Common myeloid progenitor, CD34-positive (primary cell): ENCODE measurements at regions of chr4 and their contacts with region 1.

Region 1: GRCh38 chr4:41281038-41281634 is 24.4 kb downstream of the UCHL1 start:
- DNase-seq: peak; percentile 79 to 88 (median 83)
- H3K4me3 ChIP-seq: no peak overlapping the region
- H3K27ac ChIP-seq: no peak overlapping the region
- H3K4me1 ChIP-seq: no peaks in the 10 kb centered on the region
- H3K27me3 ChIP-seq: no peaks in the 10 kb centered on the region

Region 2: GRCh38 chr4:41185614-41186597 is 95.2 kb before region 1 on chr4:
- CTCF ChIA-PET with region 1: no interaction called
- POLR2A ChIA-PET with region 1: no interaction called
- DNase-seq: peak in 2 of 3 donors; percentile 4 to 29
- H3K4me3 ChIP-seq: no peak overlapping the region
- H3K27ac ChIP-seq: no peak overlapping the region
- H3K4me1 ChIP-seq: no peaks in the 10 kb centered on the region
- H3K27me3 ChIP-seq: no peaks in the 10 kb centered on the region

Region 3: GRCh38 chr4:41257257-41257901 is 23.8 kb before region 1 on chr4:
- CTCF ChIA-PET with region 1: interaction called, 26 read pairs
- POLR2A ChIA-PET with region 1: no interaction called
- DNase-seq: peak; percentile 58 to 86 (median 83)
- H3K4me3 ChIP-seq: peak overlapping the region; percentile 51 to 75 (median 61)
- H3K27ac ChIP-seq: no peak overlapping the region
- H3K4me1 ChIP-seq: peaks cover 5 to 25% (median 17%) of the 10 kb centered on the region in 4 experiments
- H3K27me3 ChIP-seq: peaks cover 10 to 29% (median 14%) of the 10 kb centered on the region in 5 experiments

Region 4: GRCh38 chr4:41304221-41304620 is 23.1 kb after region 1 on chr4:
- CTCF ChIA-PET with region 1: interaction called, 11 read pairs
- POLR2A ChIA-PET with region 1: no interaction called
- DNase-seq: no peak
- H3K4me3 ChIP-seq: no peak overlapping the region
- H3K27ac ChIP-seq: no peak overlapping the region
- H3K4me1 ChIP-seq: peaks cover 0 to 6% (median 4%) of the 10 kb centered on the region in 4 experiments
- H3K27me3 ChIP-seq: no peaks in the 10 kb centered on the region

Region 5: DNA sequence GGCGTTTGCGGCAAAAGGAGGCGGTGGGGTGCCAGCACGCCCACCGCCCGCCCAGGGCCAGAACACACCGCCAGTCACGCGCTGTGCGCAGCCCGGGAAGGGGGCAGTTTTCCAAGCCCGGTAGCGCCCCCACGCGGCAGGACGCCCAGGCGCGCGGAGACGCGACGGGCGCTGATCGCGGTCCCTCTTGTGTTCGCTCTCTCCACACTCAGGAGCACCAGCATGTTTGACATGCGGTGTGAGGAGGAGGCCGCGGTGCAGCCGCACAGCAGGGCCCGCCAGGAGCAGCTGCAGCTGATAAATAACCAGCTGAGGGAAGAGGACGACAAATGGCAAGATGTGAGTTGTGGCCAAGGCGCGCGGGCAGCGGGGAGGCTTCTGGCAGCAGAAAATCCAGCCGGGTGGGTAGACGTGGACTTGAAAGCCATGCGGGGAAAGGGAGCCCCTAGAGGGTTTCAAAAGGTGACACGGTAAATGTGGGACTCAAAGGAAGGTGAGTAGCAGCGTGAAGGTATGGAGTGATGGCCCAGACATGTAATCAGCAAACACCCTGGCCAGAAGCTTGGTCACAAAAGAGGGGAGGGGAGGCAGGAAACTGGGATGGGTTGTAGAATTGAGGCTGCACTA is 363.3 kb after region 1 on chr4:
- CTCF ChIA-PET with region 1: interaction called, 62 read pairs
- POLR2A ChIA-PET with region 1: interaction called, 3 read pairs
- DNase-seq: peak; percentile 66 to 80 (median 77)
- H3K4me3 ChIP-seq: peak overlapping the region in 3 of 7 experiments; percentile 33 to 64 (median 38)
- H3K27ac ChIP-seq: no peak overlapping the region
- H3K4me1 ChIP-seq: peaks cover 3 to 37% (median 21%) of the 10 kb centered on the region in 4 experiments
- H3K27me3 ChIP-seq: no peaks in the 10 kb centered on the region

Region 6: DNA sequence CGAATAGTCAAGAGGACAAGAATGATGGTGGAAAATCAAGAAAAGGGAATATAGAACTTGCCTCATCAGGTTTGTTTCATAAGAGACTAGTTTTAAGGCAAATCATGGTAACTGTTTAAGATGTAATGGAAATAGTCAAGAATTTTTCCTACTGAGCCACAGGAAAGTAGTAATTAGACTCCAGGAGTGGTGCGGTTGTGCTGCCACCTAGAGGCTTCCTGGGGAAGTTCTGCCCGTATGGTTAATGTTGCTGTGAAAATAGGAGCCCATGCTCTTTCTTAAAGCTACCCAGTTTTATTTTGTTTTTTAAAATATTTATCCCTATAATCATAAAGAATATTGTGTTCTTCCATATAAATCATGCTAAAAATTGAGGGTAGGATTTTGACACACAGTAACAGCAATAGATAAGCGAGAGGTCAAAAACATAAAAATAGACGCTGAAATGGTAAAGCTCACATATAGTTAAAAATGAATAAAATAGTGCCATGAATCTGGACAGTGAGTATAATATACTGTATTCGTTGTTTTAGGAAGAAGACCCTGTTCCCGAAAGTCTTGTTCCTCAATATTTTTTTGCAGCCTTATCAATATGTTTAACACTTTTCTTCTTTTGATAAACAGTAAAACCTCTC is 380.4 kb after region 1 on chr4:
- CTCF ChIA-PET with region 1: interaction called, 97 read pairs
- POLR2A ChIA-PET with region 1: no interaction called
- DNase-seq: peak; percentile 38 to 73 (median 62)
- H3K4me3 ChIP-seq: no peak overlapping the region
- H3K27ac ChIP-seq: no peak overlapping the region
- H3K4me1 ChIP-seq: no peaks in the 10 kb centered on the region
- H3K27me3 ChIP-seq: peaks cover 0 to 2% (median 0%) of the 10 kb centered on the region in 5 experiments

Region 7: DNA sequence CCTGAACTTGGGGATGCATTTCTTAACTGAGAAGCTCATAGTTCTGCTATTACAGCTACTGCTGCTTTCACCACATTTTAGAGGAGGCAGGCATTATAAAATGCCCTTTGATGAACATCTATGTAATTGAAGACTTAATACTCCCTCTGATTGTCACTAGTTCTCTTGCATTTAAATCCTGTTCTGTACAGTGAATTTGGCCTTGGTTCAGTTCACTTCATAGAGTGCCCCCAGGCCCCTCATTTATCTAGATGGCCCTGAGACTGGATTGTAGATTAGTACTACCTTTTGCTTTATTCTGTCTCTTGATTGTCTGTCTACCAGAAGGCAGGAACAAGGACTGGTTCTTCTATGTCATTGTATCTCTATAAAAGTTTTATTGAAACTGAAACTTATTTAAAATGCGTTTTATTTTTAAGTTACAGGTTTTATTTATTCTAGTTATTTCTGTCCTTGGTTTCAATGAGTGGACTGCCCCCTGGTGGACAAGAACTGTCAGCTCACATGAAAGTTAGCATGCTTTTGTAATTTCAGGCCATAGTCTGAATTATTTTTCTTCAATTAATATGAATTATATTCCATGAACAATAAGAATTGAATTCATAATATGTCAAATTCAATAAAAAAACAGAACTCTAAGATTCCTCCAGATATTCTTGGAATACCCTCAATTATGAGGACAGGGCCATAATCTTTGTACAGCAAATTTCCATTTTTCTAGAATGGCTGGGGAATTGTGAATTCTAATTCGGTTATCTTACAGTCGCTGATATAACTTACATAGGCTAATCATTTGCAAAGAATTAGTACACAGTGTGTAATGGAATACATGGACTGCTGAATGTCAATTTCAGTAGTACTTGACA is 606.9 kb after region 1 on chr4:
- CTCF ChIA-PET with region 1: interaction called, 14 read pairs
- POLR2A ChIA-PET with region 1: no interaction called
- DNase-seq: peak; percentile 57 to 84 (median 76)
- H3K4me3 ChIP-seq: no peak overlapping the region
- H3K27ac ChIP-seq: no peak overlapping the region
- H3K4me1 ChIP-seq: no peaks in the 10 kb centered on the region
- H3K27me3 ChIP-seq: peaks cover 6 to 45% (median 11%) of the 10 kb centered on the region in 5 experiments